Posterior vena cava (tissue), 2 donors: ENCODE measurements at regions of chr7 and their contacts with region 1.

Region 1: GRCh38 chr7:151110941-151111645 is 24.8 kb downstream of the AGAP3 start:
- DNase-seq: peak; percentile 93

Region 2: DNA sequence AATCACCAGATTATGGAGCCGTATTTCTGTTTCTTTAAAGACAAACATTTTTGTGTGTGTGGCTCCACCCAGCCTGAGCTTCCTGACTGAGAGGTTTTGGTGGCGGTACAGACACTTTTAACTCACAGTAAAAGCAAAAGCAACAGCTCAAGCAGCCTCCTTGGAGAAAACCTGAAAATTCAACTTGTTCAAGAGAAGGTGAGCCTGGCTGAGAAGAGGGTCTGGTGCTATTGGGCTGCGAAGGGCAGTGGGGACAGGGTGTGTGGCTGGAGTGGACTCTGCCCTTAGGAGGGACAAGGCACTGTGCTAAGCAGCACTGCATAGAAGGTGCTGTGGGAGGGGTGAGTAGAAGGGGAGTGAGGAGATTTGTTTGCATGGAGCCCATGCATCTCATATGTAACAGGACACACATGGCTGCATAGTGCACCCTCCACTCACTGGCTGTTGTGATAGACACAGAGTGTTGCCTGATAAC is 596.3 kb before region 1 on chr7 and contains the start of gene GIMAP7:
- intact Hi-C with region 1: no loop called
- DNase-seq: no peak
- total RNA-seq, gene GIMAP7: 23.5 to 23.8 TPM

Region 3: DNA sequence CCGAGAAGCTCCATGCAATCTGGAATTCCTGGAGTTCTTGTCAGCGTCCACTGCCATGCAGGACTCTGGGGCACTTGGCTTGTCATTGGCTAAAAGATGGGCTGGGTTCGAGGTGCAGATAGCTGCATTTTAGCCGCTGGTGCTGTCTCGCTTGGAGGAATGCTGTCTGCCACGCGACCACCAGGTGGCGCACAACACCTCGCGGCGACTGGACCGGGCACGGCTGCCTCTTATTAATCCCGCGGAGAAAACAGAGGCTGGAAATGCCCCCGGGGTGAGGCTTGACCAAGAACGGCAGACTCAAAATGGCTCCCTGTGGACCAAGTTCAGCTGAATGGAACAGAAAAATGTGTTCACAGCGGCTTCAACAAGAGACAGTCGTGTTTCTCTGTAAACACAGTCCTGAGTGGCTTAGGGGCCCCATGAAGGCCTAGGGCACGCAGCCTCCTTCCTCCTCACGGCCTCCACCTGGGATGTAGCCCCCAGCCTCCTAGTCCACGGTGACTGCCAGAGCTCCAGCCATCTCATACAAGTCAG is 212.6 kb before region 1 on chr7:
- intact Hi-C with region 1: loop called in 1 of 2 experiments (anchors 5 kb)
- DNase-seq: peak; percentile 93

Region 4: DNA sequence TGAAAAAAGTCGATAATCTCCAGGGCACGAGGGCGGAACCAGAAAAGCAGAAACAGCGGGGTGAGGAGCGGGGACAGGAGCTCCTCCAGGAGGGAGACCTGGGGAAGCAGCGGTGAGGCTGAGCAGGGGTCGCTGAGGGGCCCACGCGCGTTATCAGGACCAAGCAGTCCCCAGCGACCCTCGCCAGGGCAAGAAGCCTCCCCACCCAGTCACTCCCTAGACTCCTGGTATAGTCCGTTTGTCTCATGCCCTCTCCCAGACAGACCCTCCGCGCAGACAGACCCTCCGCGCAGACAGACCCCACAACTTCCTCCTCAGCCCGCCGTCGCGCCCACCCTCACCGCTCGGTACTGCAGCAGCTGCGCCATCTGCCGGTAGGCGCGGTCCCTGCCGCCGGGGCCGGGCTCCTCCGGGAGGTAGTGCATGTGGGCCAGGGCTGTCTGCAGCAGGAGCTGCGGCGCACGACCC is 93.1 kb before region 1 on chr7:
- intact Hi-C with region 1: loop called in 1 of 2 experiments (anchors 5 kb)
- DNase-seq: peak; percentile 92

Region 5: GRCh38 chr7:151038951-151039849 is 71.9 kb before region 1 on chr7:
- intact Hi-C with region 1: loop called in 1 of 2 experiments (anchors 5 kb)
- DNase-seq: peak; percentile 96

Region 6: DNA sequence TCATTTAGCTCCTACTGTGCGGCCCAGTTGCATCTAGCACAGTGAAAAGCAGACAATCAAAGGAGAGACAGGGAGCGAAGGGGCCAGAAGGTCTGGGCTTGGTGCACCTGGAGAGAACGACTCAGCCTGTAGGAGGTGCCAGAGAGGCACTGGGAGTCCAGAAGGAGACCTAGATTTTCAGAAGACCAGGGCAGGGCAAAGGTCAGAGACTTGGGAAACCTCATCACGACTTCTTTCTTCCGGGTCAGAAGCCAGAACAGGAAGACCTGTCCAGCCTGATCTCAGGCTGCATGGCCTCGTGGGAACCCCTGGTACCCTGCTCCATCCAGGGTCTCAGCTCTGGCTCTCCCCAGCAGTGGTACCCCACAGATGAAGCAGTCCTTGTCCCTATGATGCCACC is 19.7 kb before region 1 on chr7:
- intact Hi-C with region 1: loop called in 1 of 2 experiments (anchors 2 kb)
- DNase-seq: no peak

Region 7: DNA sequence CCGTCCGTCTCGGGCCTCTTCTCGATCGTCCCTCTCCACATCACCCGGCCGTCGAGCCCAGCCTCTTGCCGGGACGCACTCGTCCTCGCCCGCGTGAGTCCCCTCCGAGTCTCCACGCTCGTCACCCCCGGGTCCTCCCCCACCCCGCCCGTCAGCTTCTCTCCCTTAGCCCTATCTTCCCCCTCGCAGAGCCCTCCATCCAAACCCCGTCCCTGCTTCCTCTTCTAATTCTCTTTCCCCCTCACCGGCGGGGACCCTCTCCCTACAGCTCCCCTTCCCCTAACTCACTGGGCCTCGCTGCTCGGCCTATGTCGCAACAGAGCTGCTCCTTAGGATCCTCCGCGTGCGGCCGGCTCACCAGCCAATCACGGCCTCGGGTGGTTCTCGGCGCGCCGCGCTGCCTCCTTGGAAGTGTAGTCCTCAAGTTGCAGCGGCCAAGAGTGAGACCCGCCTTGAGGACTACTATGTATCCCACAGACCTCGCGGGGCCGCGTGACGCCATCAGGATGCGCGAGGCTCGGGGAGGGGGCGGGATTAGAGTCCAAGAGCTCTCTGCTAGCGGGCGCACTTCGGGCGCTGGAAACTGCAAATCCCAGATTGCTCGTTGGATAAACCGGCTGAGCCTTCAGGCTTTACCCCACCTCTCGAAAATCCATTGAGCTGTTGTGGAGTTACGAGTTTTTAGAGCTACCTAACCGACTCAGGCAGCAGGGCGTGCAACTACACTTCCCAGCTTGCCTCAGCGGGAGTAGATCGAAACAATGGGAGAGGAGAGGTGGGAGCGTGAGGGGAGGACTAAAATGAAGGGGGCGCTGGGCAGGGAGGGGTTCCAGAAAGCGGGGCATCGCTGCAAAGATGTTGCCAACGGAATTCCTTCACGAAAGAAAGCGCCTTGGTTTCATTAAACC is 116.0 kb after region 1 on chr7 and contains the start of gene ABCF2:
- intact Hi-C with region 1: no loop called
- DNase-seq: peak; percentile 100
- total RNA-seq, gene ABCF2: 24.4 to 27.4 TPM